Left ventricle myocardium inferior (tissue), 1 donor: ENCODE measurements at regions of chr6 and their contacts with region 1.

Region 1: GRCh38 chr6:149454386-149454848 is 30.4 kb downstream of the ZC3H12D start:
- DNase-seq: peak; percentile 98
- H3K4me3 ChIP-seq: peak overlapping the region; percentile 22
- H3K27ac ChIP-seq: peak overlapping the region; percentile 90
- H3K4me1 ChIP-seq: peaks cover 81% of the 10 kb centered on the region
- H3K27me3 ChIP-seq: peaks cover 25% of the 10 kb centered on the region
- CTCF ChIP-seq: no peak

Region 2: DNA sequence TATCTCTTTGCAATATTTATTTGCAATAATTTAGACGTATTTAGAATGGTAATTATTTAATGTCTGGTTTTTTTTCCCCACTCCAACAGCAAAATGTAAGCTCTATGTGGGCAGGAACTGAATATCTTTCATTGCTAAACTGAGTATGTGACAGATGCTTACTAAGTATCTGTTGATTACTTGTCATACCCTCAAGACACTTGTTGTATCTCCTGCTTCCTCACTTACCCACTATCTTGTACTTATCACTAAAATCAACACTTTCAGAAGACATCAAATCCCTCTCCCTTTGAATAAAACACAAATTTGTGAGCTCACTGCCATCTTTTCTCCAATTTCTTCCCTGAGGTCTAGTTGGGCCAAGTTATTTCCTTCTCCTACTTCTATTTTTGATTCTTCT is 61.1 kb after region 1 on chr6:
- intact Hi-C with region 1: loop called (anchors 5 kb)
- DNase-seq: no peak
- H3K4me3 ChIP-seq: no peak overlapping the region
- H3K27ac ChIP-seq: no peak overlapping the region
- H3K4me1 ChIP-seq: peaks cover 12% of the 10 kb centered on the region
- H3K27me3 ChIP-seq: no peaks in the 10 kb centered on the region
- CTCF ChIP-seq: no peak

Region 3: GRCh38 chr6:149560736-149561135 is 106.3 kb after region 1 on chr6:
- intact Hi-C with region 1: no loop called
- DNase-seq: no peak
- H3K4me3 ChIP-seq: no peak overlapping the region
- H3K27ac ChIP-seq: no peak overlapping the region
- H3K4me1 ChIP-seq: peaks cover 10% of the 10 kb centered on the region
- H3K27me3 ChIP-seq: no peaks in the 10 kb centered on the region
- CTCF ChIP-seq: peak; percentile 50

Region 4: DNA sequence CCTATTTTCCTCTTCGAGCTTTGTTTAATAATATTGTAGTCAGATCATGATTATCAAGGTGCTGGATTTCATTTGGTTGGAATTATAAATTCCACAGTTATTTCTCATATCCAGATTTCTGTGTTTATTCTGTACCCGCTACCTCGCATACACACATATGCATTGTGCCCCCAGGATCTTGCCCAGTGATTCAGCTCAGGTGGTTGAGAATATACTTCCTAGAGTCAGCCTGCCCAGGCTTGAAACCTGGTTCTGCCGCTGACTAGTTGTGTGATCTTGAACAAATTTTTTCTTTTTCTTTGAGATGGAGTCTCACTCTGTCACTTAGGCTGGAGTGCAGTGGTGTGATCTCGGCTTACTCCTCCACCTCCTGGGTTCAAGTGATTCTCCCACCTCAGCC is 126.5 kb after region 1 on chr6:
- intact Hi-C with region 1: no loop called
- DNase-seq: no peak
- H3K4me3 ChIP-seq: no peak overlapping the region
- H3K27ac ChIP-seq: no peak overlapping the region
- H3K4me1 ChIP-seq: no peaks in the 10 kb centered on the region
- H3K27me3 ChIP-seq: no peaks in the 10 kb centered on the region
- CTCF ChIP-seq: no peak